ENCODE measurements at regions of chr4 and their contacts with region 1.

Region 1: DNA sequence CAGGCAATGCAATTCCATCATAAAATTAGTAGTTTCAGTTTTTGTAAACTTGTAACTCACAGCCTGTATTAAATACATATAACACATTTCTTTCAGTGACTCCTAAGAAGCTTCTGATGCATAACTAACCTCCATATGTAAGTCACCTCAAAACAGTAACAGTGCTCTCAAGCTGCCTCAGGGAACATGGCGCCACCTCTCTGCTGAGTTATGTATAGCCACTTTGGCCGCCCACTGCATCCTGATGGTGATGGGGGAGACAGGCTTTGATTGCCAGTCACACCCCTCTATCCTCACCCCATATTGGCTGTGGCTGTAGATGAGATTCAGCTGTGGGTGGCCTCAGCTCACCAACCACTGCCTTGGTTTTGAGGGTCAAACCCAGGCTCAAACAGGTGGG is 54.3 kb downstream of the LRBA start:
- DNase-seq: peak; percentile 46
- H3K4me3 ChIP-seq: no peak overlapping the region
- H3K27ac ChIP-seq: no peak overlapping the region
- H3K4me1 ChIP-seq: peaks cover 22% of the 10 kb centered on the region
- H3K27me3 ChIP-seq: no peaks in the 10 kb centered on the region
- CTCF ChIP-seq: peak; percentile 52 to 57
- POLR2A ChIP-seq: no peak

Region 2: GRCh38 chr4:150938417-150938816 is 22.4 kb before region 1 on chr4:
- CTCF ChIA-PET with region 1: interaction called, 11 read pairs
- POLR2A ChIA-PET with region 1: no interaction called
- dilution Hi-C with region 1: no loop called
- intact Hi-C with region 1: no loop called
- DNase-seq: no peak
- H3K4me3 ChIP-seq: no peak overlapping the region
- H3K27ac ChIP-seq: no peak overlapping the region
- H3K4me1 ChIP-seq: peaks cover 8% of the 10 kb centered on the region
- H3K27me3 ChIP-seq: no peaks in the 10 kb centered on the region
- CTCF ChIP-seq: no peak
- POLR2A ChIP-seq: no peak

Region 3: GRCh38 chr4:150950657-150951288 is 10.0 kb before region 1 on chr4:
- CTCF ChIA-PET with region 1: interaction called, 23 read pairs
- POLR2A ChIA-PET with region 1: interaction called, 3 read pairs
- dilution Hi-C with region 1: no loop called
- intact Hi-C with region 1: no loop called
- DNase-seq: peak; percentile 39
- H3K4me3 ChIP-seq: no peak overlapping the region
- H3K27ac ChIP-seq: no peak overlapping the region
- H3K4me1 ChIP-seq: peaks cover 11% of the 10 kb centered on the region
- H3K27me3 ChIP-seq: no peaks in the 10 kb centered on the region
- CTCF ChIP-seq: no peak
- POLR2A ChIP-seq: no peak

Region 4: DNA sequence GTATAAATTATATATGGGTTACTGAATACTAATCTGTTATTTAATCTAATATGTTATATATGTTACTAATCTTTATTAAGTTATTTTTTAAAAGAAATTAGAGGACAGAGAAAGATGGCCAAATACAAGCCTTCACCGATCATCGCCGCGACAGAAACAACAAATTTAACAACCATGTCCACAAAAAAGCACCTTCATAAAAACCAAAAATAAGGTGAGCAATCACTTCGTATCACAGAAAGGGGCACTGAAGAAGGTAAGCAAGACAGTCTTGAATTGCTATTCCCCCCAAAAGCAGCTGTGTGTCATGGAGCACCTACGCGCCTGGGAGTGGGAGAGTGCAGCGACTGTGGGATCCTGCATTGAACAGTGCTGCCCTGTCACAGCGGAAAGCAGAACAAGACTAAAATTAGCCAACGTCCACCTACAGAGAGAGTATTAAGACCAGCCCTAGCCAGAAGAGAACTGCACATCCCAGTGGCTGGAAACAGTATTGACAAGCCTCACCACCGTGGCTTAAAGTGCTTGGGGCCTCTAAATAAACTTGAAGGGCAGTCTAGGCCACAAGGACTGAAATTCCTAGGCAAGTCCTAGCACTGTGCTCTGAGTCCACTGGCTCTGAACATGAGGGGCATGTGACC is 15.8 kb after region 1 on chr4:
- CTCF ChIA-PET with region 1: interaction called, 12 read pairs
- POLR2A ChIA-PET with region 1: no interaction called
- dilution Hi-C with region 1: no loop called
- intact Hi-C with region 1: no loop called
- DNase-seq: no peak
- H3K4me3 ChIP-seq: no peak overlapping the region
- H3K27ac ChIP-seq: no peak overlapping the region
- H3K4me1 ChIP-seq: peaks cover 7% of the 10 kb centered on the region
- H3K27me3 ChIP-seq: no peaks in the 10 kb centered on the region
- CTCF ChIP-seq: no peak
- POLR2A ChIP-seq: no peak

Measured in endothelial cell of umbilical vein (primary cell).